Cardiac septum (tissue), 1 donor: ENCODE measurements at regions of chr6 and their contacts with region 1.

Region 1: DNA sequence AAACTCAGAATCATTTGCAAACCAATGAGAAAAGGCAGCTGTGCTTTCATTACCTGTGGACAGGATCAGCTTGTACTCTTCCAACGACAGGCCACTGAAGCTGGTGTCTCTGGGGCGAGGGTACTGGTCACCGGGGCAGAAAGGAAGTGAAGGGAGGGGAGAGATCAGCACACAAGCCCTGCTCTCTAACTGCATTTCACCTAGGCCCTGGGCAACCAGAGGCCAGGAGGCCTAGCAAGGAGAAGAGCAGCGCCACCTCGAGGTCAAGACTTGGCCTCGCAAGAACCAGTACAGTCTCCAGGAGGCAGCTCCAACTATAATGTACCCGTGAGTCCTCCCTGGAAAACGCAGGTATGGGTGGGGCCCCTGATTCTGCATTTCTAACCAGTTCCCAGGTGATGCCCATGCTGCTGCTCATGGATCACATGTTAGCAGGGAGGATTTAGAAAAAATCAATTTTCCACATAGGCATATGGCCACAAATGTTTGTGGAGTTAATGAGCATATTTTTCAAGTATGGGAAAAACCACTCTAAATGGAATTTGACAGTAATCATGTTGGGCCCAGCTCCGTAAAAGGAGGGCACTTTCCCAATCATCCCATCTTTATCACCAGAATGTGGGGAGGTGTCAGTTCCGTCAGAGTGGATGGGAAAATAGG is 11.0 kb downstream of the UQCC2 start:
- DNase-seq: no peak

Region 2: GRCh38 chr6:33417903-33418689 is 282.4 kb before region 1 on chr6 and contains the start of gene CUTA:
- intact Hi-C with region 1: loop called (anchors 10 kb)
- DNase-seq: peak; percentile 100
- total RNA-seq, gene CUTA: 94.6 TPM